MCF 10A (cell line): ENCODE measurements at regions of chr20 and their contacts with region 1.

Region 1: GRCh38 chr20:13546497-13547131 is 92.1 kb downstream of the TASP1 start:
- DNase-seq: peak; percentile 86
- H3K4me3 Mint-ChIP-seq: no peak overlapping the region
- H3K27ac Mint-ChIP-seq: peak overlapping the region; percentile 4
- H3K4me1 Mint-ChIP-seq: peaks cover 3% of the 10 kb centered on the region
- H3K27me3 Mint-ChIP-seq: no peaks in the 10 kb centered on the region
- CTCF ChIP-seq: peak; percentile 67

Region 2: DNA sequence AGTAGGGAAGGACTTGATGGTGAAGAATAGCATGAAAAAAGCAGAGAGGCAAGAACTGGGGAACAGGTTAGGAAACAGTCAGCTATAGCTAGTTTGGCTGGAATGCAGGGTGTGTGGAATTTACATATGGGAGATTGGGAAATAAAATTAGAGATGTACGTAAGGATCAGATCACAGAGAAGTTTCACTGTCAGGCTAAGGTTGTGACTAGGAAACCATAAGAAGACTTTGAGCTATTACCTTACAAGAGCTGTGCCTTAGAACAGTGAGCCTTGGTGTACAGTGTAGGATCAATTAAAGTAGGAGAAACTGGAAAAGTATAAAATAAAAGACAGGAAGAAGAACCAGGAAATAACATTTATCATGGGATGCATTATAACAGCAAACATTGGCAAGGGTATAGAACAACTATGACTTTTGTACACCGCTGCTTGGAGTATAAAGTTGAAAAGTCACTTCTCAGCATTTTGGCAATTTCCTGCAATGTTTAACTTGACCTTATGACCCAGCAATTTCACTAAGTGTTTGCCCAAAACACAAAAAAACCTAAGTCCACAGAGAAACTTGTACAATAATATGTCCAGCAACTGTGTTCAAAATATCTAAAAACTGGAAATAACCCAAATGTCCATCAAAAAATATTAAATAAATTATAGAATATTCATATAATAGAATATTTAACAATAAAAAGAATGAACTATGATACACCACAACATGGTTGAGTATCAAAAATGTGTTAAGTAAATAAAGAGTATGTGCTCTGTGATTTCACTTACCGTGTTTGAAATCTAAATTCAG is 569.1 kb before region 1 on chr20:
- CTCF ChIA-PET with region 1: interaction called, 16 read pairs
- POLR2A ChIA-PET with region 1: no interaction called
- intact Hi-C with region 1: no loop called
- DNase-seq: peak; percentile 8
- H3K4me3 Mint-ChIP-seq: no peak overlapping the region
- H3K27ac Mint-ChIP-seq: peak overlapping the region; percentile 6
- H3K4me1 Mint-ChIP-seq: peaks cover 8% of the 10 kb centered on the region
- H3K27me3 Mint-ChIP-seq: no peaks in the 10 kb centered on the region
- CTCF ChIP-seq: no peak

Region 3: GRCh38 chr20:13286607-13287006 is 260.0 kb before region 1 on chr20:
- CTCF ChIA-PET with region 1: interaction called, 21 read pairs
- POLR2A ChIA-PET with region 1: no interaction called
- intact Hi-C with region 1: no loop called
- DNase-seq: peak; percentile 91
- H3K4me3 Mint-ChIP-seq: peak overlapping the region; percentile 33
- H3K27ac Mint-ChIP-seq: peak overlapping the region; percentile 98
- H3K4me1 Mint-ChIP-seq: peaks cover 28% of the 10 kb centered on the region
- H3K27me3 Mint-ChIP-seq: no peaks in the 10 kb centered on the region
- CTCF ChIP-seq: no peak

Region 4: GRCh38 chr20:13384132-13384531 is 162.5 kb before region 1 on chr20:
- CTCF ChIA-PET with region 1: interaction called, 11 read pairs
- POLR2A ChIA-PET with region 1: no interaction called
- intact Hi-C with region 1: no loop called
- DNase-seq: no peak
- H3K4me3 Mint-ChIP-seq: no peak overlapping the region
- H3K27ac Mint-ChIP-seq: no peak overlapping the region
- H3K4me1 Mint-ChIP-seq: no peaks in the 10 kb centered on the region
- H3K27me3 Mint-ChIP-seq: no peaks in the 10 kb centered on the region
- CTCF ChIP-seq: no peak

Region 5: DNA sequence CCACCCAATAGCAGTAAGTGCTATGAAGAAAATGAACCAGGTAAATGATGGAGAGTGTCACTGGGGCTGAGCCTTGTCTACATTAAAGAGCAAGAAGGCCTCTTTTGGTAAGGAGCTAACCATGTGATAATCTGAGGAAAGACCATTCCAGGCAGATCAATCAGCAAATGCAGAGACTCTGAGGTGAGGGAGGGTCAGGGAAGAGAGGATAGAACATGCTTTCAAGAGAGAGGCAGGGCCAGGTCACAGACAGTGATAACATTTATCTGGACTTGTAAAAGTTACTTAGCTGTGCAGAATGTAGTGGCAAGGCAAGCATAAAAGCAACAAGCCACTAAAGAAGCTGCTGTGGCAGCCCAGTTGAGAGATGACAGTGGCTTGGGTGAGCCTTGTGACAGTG is 105.2 kb before region 1 on chr20:
- CTCF ChIA-PET with region 1: interaction called, 17 read pairs
- POLR2A ChIA-PET with region 1: no interaction called
- intact Hi-C with region 1: no loop called
- DNase-seq: no peak
- H3K4me3 Mint-ChIP-seq: no peak overlapping the region
- H3K27ac Mint-ChIP-seq: no peak overlapping the region
- H3K4me1 Mint-ChIP-seq: no peaks in the 10 kb centered on the region
- H3K27me3 Mint-ChIP-seq: no peaks in the 10 kb centered on the region
- CTCF ChIP-seq: no peak

Region 6: GRCh38 chr20:13501500-13501899 is 45.1 kb before region 1 on chr20:
- CTCF ChIA-PET with region 1: interaction called, 28 read pairs
- POLR2A ChIA-PET with region 1: no interaction called
- intact Hi-C with region 1: no loop called
- DNase-seq: no peak
- H3K4me3 Mint-ChIP-seq: no peak overlapping the region
- H3K27ac Mint-ChIP-seq: no peak overlapping the region
- H3K4me1 Mint-ChIP-seq: no peaks in the 10 kb centered on the region
- H3K27me3 Mint-ChIP-seq: no peaks in the 10 kb centered on the region
- CTCF ChIP-seq: no peak